Ascending aorta (tissue), 2 donors: ENCODE measurements at regions of chr18 and their contacts with region 1.

Region 1: GRCh38 chr18:21831413-21831831 is 90.8 kb downstream of the MIB1 start:
- DNase-seq: peak; percentile 26 to 85
- H3K4me3 ChIP-seq: peak overlapping the region; percentile 18 to 55
- H3K27ac ChIP-seq: peak overlapping the region; percentile 67 to 77
- H3K4me1 ChIP-seq: peaks cover 0 to 20% of the 10 kb centered on the region in 2 donors
- H3K27me3 ChIP-seq: no peaks in the 10 kb centered on the region
- CTCF ChIP-seq: no peak

Region 2: DNA sequence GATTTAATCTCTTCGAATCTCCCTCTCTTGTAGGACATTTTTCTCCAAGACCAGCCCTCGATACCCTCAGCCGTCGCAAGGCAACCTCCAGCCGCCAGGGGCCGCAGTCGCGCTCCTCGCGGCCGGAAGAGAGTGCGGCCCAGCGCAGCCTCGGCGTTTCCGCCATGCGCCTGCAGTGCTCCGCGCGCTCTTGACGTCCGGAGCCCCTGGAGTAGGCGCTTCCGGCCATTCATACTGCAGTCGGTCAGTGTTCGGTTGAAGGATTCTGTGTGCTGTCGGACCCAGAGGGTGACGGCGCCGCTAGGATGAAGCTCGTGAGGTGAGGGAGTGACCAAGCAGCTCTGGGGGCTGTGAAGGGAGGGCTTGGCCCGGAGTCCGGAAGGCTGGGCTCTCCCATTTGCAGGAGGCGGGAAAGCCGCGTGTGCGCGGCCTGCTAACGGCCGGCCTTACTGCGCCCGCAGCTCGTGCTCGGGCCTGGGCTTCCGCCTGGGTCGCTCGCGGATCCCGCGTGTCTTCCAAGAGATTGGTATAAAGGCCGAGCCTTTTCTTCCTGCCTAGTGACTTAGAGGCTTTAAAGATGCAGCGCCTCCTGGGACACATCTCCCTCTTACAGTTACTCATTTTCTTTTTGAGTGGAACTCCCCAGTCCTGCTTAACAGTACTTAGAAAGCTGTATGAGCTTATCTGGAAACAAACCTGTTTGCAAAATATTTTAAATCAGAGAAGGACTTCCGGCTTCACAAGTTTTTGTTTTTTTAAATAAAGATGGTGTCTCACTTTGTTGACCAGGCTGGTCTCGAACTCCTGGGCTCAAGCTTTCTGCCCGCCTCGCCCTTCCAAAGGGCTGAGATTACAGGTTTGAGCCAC is 219.1 kb before region 1 on chr18 and contains the start of gene SNRPD1:
- intact Hi-C with region 1: loop called (anchors 5 kb)
- DNase-seq: peak; percentile 39 to 93
- H3K4me3 ChIP-seq: peak within 1 kb of the TSS; percentile 84 to 88
- H3K27ac ChIP-seq: peak within 1 kb of the TSS; percentile 83 to 89
- H3K4me1 ChIP-seq: peaks cover 3 to 13% of the 10 kb centered on the region in 2 donors
- H3K27me3 ChIP-seq: no peaks in the 10 kb centered on the region
- CTCF ChIP-seq: peak; percentile 84 to 97 (median 97)
- total RNA-seq, gene SNRPD1: 0.85 TPM

Region 3: DNA sequence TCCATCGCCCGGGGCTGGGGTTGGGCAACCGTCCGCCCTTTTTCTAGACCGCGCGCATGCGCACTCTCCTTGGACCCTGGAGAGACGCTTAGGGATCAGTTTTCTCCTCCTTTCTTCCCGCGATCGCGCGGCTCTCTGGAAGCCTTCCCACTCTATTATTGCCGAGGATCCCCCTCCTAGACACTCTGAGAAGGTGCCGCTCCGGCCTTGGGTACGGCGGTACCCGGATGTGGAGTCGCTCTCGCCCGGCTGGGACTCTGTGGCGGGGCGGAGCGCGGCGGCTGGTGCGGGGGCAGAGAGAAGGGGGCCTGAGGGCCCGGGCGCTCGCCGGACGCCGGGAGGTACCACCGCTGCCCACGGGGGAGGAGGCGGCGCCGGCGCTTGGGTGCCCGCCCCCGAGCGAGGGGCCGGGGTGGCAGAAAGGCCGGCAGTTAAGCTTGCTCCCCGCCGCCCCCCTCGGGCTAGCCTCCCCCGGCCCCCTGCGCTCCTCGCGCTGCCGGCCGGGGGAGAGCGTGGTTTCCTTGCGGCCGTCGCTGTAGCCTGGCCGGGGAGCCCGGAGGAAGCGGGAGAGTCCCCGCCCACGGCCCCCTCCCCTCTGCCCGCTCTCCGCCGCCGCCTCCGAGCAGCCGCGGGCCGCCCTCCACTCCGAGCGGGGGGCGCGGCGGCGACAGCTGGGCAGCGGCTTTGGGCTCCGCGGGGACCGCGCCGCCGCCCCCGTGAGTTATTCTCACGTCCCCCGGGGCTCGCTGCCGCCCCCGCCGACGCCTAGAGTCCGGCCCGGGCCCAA is 90.5 kb before region 1 on chr18 and contains the start of gene MIB1:
- intact Hi-C with region 1: loop called (anchors 1 kb)
- DNase-seq: peak in 1 of 2 donors; percentile 93
- H3K4me3 ChIP-seq: peak within 1 kb of the TSS; percentile 76 to 88
- H3K27ac ChIP-seq: peak within 1 kb of the TSS; percentile 96 to 99
- H3K4me1 ChIP-seq: peaks cover 0 to 5% of the 10 kb centered on the region in 2 donors
- H3K27me3 ChIP-seq: no peaks in the 10 kb centered on the region
- CTCF ChIP-seq: no peak
- total RNA-seq, gene MIB1: 11.0 TPM

Region 4: GRCh38 chr18:22207021-22207758 is 375.8 kb after region 1 on chr18:
- intact Hi-C with region 1: no loop called
- DNase-seq: no peak
- H3K4me3 ChIP-seq: no peak overlapping the region
- H3K27ac ChIP-seq: peak overlapping the region in 1 of 2 donors; percentile 79
- H3K4me1 ChIP-seq: peaks cover 16 to 41% of the 10 kb centered on the region in 2 donors
- H3K27me3 ChIP-seq: no peaks in the 10 kb centered on the region
- CTCF ChIP-seq: no peak